Heart right ventricle (tissue), 16 donors: ENCODE measurements at regions of chr9 and their contacts with region 1.

Region 1: DNA sequence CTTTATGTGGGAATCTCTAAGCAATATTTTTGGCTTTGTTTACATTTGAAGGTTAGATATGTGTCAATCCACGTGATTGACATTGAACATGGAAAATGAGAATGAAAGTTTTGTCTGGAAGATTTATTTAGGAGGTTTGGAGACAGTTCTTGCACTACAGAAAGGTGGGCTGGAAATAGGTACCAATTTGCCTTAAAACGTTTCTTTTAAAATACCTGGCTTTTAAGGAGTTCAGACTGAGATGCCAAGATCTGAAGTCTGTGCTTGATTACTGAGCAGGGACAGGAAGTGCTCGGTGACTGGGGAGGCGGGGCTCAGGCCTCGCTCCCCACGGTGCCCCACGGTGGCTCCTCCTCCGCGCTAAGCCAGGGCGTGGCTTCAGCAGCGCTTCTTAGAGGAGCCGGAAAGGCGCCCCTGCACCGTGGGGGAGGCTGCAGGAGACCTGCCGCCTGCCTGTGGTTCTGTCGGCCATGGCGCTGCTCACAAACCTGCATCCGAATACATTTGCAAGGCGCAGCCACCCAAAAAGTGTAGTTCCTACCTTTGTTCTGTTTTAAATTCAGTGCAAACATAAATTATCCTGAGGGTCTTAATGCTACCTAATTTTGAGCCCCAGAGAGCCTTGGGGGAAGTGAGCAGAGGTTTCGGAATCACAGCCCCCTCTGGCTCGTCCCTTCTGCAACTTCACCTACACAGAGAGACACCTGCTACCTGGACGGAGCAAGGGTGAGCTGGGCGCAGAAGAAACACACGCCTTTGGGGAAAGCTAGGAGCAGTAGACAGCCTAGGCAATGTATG is 49.2 kb downstream of the USP20 start:
- DNase-seq: peak; percentile 85 to 90
- ATAC-seq: peak; percentile 68 to 82 (median 77)
- H3K4me3 ChIP-seq: peak overlapping the region in 9 of 10 donors; percentile 1 to 55 (median 47)
- H3K27ac ChIP-seq: peak overlapping the region in 9 of 10 donors; percentile 74 to 92 (median 80)
- H3K4me1 ChIP-seq: peaks cover 5 to 61% (median 39%) of the 10 kb centered on the region in 9 donors
- H3K27me3 ChIP-seq: no peaks in the 10 kb centered on the region
- CTCF ChIP-seq: no peak

Region 2: DNA sequence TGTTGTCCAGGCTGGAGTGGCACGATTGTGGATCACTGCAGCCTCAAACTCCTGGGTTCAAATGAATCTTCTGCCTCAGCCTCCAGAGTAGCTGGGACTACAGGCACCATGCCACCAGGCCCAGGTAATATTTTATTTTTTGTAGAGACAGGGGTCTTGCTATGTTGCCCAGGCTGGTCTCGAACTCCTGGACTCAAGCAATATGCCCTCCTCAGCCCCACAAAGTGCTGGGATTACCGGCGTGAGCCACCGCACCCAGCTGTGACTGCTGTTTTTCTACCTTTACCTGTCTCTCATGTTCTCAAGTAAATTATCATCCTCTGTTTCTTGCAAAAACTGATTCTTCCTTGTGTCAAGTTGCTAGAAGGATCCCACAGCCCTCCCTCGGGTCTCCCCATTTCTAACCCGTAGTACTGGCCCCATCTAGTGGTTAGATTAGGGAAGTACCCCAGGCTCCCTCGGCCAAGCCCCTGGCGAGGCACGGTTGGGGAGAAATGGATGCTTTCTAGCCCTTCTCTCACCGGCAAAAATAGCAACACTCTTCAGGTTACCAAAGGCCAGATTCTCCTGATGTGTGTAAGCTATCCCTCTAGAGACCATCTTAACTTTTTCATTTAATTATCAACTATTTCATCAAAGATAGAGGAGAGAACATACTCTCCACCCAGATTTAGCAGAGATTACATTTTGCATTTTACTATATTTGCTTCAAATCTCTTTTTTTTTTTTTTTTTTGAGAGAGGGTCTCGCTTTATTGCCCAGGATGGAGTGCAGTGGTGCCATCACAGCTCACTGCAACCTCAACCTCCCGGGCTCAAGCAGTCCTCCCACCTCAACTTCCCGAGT is 100.7 kb before region 1 on chr9:
- intact Hi-C with region 1: no loop called
- DNase-seq: peak; percentile 33 to 75
- ATAC-seq: peak; percentile 83 to 96 (median 93)
- H3K4me3 ChIP-seq: no peak overlapping the region
- H3K27ac ChIP-seq: no peak overlapping the region
- H3K4me1 ChIP-seq: peaks cover 0 to 6% (median 0%) of the 10 kb centered on the region in 9 donors
- H3K27me3 ChIP-seq: peaks cover 0 to 17% (median 8%) of the 10 kb centered on the region in 7 donors
- CTCF ChIP-seq: peak; percentile 89 to 94 (median 92)

Region 3: DNA sequence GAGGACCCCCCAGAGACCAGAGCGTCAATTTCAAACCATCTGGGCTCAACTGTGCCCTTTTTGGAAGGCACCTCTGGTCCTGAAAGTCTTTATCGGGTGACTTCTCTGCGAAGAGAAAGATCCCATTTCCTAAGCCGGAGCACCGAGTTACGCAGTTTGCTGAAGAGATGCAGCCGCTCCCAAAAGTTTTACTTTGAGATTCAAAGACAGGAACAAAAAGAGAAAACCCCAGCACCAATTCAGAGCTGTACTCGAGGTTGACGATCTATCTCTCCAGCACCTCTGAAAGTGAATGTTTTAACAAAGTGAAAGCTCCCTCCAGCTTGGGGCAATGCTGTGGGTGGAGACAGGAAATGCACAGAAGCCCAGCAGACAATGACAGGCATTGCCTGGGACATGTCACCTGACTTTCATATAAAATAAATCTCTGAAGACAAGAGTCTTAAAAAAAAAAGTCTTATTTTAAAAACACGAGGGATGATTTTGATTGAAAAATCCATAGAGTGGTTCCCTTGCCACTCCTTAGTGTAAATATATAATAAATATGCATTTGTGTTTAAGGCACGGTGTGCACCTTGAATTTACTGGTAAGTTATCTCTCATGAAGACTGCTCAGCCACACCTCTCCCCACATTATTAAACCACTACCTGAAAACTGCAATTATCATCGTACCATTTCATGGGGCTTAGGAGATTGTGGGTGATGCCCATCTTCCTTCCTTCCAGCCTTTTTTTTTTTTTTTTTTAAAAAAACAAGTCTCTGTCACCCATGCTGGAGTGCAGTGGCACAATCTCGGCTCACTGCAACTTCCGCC is 78.7 kb after region 1 on chr9:
- intact Hi-C with region 1: loop called in 3 of 10 experiments (anchors 5 to 10 kb)
- DNase-seq: peak in 1 of 2 donors; percentile 56
- ATAC-seq: peak; percentile 72 to 90 (median 82)
- H3K4me3 ChIP-seq: peak overlapping the region in 9 of 10 donors; percentile 32 to 61 (median 56)
- H3K27ac ChIP-seq: peak overlapping the region; percentile 76 to 97 (median 91)
- H3K4me1 ChIP-seq: peaks cover 3 to 62% (median 37%) of the 10 kb centered on the region in 9 donors
- H3K27me3 ChIP-seq: no peaks in the 10 kb centered on the region
- CTCF ChIP-seq: no peak

Region 4: GRCh38 chr9:130053504-130054324 is 169.3 kb after region 1 on chr9 and contains the start of gene GPR107:
- intact Hi-C with region 1: loop called in 2 of 10 experiments (anchors 5 to 10 kb)
- DNase-seq: peak; percentile 83
- ATAC-seq: peak; percentile 97 to 99 (median 98)
- H3K4me3 ChIP-seq: peak within 1 kb of the TSS; percentile 64 to 100 (median 96)
- H3K27ac ChIP-seq: peak within 1 kb of the TSS; percentile 53 to 99 (median 86)
- H3K4me1 ChIP-seq: peaks cover 6 to 42% (median 30%) of the 10 kb centered on the region in 9 donors
- H3K27me3 ChIP-seq: no peaks in the 10 kb centered on the region
- CTCF ChIP-seq: no peak
- total RNA-seq, gene GPR107: 19.9 to 35.6 (median 24.2) TPM

Region 5: DNA sequence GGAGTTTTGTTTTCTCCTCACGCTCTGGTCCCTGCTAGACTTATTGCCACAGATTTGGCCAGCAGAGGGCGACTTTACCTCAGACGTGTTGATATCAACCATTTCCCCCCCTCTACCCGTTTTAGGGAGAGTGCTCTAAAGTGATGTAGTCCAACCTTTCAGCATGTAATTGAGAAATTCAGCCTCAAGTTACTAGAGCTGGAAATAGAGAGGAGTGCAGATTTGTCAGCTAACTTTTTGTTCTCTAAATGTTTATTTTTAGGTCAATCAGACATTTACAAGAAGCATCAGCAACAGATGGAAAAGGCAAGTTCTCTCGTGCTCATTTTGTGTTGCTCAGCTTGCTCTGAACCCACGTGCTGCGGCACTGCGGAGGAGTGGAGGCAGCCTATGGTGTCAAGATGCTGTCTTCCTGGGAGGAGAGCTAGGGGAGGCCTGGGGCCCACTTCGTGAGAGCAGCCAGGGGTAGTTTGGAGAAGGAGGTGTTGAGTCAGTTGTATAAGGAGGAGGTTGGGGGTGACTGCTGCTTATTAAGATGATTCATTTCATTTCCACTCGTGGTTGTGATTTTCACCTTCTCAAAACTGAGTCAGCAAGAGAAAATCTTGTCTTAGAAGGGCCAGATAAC is 222.9 kb after region 1 on chr9:
- intact Hi-C with region 1: loop called in 4 of 10 experiments (anchors 5 to 10 kb)
- DNase-seq: peak; percentile 75 to 85
- ATAC-seq: peak; percentile 69 to 88 (median 80)
- H3K4me3 ChIP-seq: no peak overlapping the region
- H3K27ac ChIP-seq: no peak overlapping the region
- H3K4me1 ChIP-seq: peaks cover 0 to 13% (median under 1%) of the 10 kb centered on the region in 9 donors
- H3K27me3 ChIP-seq: no peaks in the 10 kb centered on the region
- CTCF ChIP-seq: peak; percentile 59 to 86 (median 79)

Region 6: GRCh38 chr9:130243015-130243734 is 358.8 kb after region 1 on chr9:
- intact Hi-C with region 1: loop called in 9 of 10 experiments (anchors 5 to 10 kb)
- DNase-seq: peak; percentile 58 to 78
- ATAC-seq: peak; percentile 62 to 77 (median 72)
- H3K4me3 ChIP-seq: peak overlapping the region in 1 of 10 donors; percentile 9
- H3K27ac ChIP-seq: no peak overlapping the region
- H3K4me1 ChIP-seq: peaks cover 0 to 14% (median 0%) of the 10 kb centered on the region in 9 donors
- H3K27me3 ChIP-seq: no peaks in the 10 kb centered on the region
- CTCF ChIP-seq: peak; percentile 88 to 96 (median 93)